Gastrocnemius medialis (tissue), 4 donors: ENCODE measurements at regions of chr1 and their contacts with region 1.

Region 1: GRCh38 chr1:183551904-183552303 is 38.4 kb downstream of the NCF2 start:
- DNase-seq: no peak
- ATAC-seq: no peak
- H3K4me3 ChIP-seq: no peak overlapping the region
- H3K27ac ChIP-seq: no peak overlapping the region
- H3K4me1 ChIP-seq: no peaks in the 10 kb centered on the region
- H3K27me3 ChIP-seq: no peaks in the 10 kb centered on the region
- CTCF ChIP-seq: no peak
- POLR2A ChIP-seq: no peak

Region 2: GRCh38 chr1:183404456-183404855 is 147.4 kb before region 1 on chr1:
- in situ Hi-C with region 1: no loop called
- intact Hi-C with region 1: no loop called
- DNase-seq: no peak
- ATAC-seq: no peak
- H3K4me3 ChIP-seq: no peak overlapping the region
- H3K27ac ChIP-seq: no peak overlapping the region
- H3K4me1 ChIP-seq: no peaks in the 10 kb centered on the region
- H3K27me3 ChIP-seq: no peaks in the 10 kb centered on the region
- CTCF ChIP-seq: no peak
- POLR2A ChIP-seq: no peak

Region 3: DNA sequence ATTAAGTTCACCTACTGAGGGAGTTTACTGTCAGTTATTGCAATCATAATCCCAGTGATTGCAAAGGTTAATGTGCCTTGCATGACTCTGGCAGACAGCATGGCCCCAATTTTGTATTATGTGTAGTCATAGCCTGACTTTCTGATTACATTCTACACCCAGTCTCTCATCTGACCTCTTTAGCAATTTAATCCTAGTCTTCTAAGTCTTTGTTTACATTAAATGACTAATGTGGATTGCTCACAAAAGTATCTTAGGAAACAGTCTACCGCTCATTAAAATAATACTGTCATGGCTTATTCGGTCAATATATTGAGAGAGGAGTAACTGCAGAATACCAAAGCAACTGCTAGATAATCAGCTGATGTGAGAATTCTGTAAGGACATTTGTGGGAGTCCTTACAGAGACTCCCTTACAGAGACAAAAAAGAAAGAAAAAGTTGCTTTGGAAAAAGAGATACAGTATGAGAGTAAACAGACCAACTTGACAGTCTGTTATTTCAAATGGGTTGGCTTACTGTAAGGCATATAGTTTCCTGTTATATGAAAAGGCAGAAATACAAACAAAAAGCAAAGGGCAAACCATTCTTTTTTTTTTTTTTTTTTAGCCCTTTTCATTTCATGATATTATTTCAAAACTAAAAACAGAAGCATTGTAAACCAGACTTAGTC is 36.8 kb before region 1 on chr1:
- in situ Hi-C with region 1: no loop called
- intact Hi-C with region 1: loop called (anchors 5 kb)
- DNase-seq: no peak
- ATAC-seq: no peak
- H3K4me3 ChIP-seq: no peak overlapping the region
- H3K27ac ChIP-seq: no peak overlapping the region
- H3K4me1 ChIP-seq: peaks cover 0 to 3% of the 10 kb centered on the region in 2 donors
- H3K27me3 ChIP-seq: no peaks in the 10 kb centered on the region
- CTCF ChIP-seq: no peak
- POLR2A ChIP-seq: no peak

Region 4: DNA sequence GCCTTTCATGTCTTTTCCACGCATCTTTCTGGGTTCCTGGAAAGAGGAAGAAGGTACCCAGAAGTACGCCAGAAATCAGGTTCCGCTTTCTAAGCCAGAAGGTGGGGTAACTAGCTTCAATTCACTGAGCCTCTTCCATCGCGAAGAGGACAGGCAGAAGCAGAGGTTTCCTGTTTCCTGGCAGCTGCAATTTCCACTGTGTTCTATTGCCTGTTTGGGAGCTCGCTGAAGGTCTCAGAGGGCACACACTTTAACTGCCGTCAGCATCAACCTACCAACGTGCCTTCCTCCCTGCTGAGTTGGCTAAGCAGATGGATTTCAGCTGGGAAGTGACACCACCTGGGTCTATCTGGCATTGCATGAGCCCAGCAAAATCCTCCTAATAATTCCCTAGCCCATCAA is 28.4 kb after region 1 on chr1:
- in situ Hi-C with region 1: no loop called
- intact Hi-C with region 1: loop called (anchors 1 kb)
- DNase-seq: peak; percentile 14 to 36
- ATAC-seq: peak in 1 of 2 donors; percentile 30
- H3K4me3 ChIP-seq: no peak overlapping the region
- H3K27ac ChIP-seq: peak overlapping the region in 1 of 4 donors; percentile 27
- H3K4me1 ChIP-seq: no peaks in the 10 kb centered on the region
- H3K27me3 ChIP-seq: no peaks in the 10 kb centered on the region
- CTCF ChIP-seq: no peak
- POLR2A ChIP-seq: no peak

Region 5: DNA sequence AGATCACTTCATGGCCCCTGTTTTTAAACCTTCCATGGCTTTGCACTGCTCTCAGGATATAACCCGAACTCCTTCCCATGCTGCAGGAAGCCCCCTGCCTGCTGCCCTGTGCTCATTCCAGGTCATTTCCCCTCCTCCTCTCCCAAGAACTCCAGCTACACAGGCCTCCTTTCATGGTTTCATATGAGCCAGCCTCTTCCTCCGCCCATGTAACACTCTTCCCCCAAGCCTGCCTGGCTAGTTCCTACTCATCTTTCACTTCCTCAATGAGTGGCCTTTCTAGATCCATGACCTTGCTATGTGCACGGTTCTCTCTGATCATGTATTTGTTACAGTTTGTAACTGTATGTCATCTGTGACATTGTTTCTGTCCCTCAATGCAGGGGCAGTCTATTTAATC is 41.5 kb after region 1 on chr1:
- in situ Hi-C with region 1: no loop called
- intact Hi-C with region 1: no loop called
- DNase-seq: no peak
- ATAC-seq: no peak
- H3K4me3 ChIP-seq: no peak overlapping the region
- H3K27ac ChIP-seq: no peak overlapping the region
- H3K4me1 ChIP-seq: no peaks in the 10 kb centered on the region
- H3K27me3 ChIP-seq: no peaks in the 10 kb centered on the region
- CTCF ChIP-seq: no peak
- POLR2A ChIP-seq: no peak